PC-3 (cell line): ENCODE measurements at regions of chr22 and their contacts with region 1.

Region 1: DNA sequence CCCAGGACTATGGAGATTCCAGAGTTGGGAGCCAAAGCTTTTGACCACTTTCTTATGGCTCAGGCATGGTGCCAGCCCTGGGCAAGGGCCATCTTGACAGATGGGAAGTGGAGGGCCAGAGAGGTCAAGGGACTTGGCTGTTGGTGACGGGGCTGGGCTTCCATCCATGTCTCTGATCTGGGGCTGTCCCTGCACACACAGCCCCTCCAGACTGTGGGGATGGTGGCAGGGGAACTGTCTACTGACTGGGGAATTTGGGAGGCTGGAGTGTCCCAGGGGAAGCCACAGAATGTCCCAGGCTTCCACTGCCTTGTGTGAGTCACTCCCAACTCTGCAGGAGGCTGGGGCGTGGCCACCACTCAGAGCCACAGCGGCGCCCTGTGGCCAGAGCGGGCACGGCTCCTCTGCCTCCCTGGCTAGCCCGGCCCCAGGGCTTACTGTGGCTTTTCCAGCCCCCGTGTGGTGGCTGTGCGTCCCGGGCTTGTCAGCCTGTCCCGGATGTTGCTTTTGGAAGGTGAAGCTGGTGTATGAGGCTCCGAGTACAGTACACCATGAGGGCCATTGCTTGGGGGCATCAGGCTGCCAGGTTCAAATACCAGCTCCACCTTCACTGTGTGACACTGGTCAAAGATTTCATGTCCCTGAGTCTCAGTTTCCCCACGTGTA is 19.6 kb downstream of the C22orf23 start:
- DNase-seq: peak; percentile 93
- ATAC-seq: peak; percentile 97
- H3K4me3 ChIP-seq: no peak overlapping the region
- H3K27ac ChIP-seq: peak overlapping the region; percentile 37
- H3K4me1 ChIP-seq: peaks cover 10% of the 10 kb centered on the region
- H3K27me3 ChIP-seq: no peaks in the 10 kb centered on the region
- CTCF ChIP-seq: peak; percentile 86

Region 2: DNA sequence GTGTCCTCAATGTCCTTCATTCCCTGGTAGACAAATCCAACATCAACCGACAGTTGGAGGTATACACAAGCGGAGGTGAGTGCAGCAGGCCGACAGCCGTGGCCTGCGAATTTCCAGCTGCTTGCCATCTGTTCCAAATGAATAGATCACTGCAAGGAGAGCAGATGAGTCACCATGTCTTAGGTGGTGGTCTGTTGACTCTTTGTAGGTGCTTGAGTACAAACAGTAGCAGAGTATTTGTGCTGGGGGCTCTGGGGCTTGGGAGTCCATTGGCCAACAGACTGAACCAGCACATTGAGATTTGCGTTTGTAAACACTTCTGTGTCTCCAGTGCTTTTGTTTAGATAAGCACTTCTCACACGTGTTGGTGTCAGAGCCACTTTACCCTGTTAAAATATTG is 63.6 kb before region 1 on chr22:
- CTCF ChIA-PET with region 1: no interaction called
- POLR2A ChIA-PET with region 1: no interaction called
- intact Hi-C with region 1: no loop called
- DNase-seq: no peak
- ATAC-seq: no peak
- H3K4me3 ChIP-seq: no peak overlapping the region
- H3K27ac ChIP-seq: no peak overlapping the region
- H3K4me1 ChIP-seq: no peaks in the 10 kb centered on the region
- H3K27me3 ChIP-seq: no peaks in the 10 kb centered on the region
- CTCF ChIP-seq: no peak

Region 3: DNA sequence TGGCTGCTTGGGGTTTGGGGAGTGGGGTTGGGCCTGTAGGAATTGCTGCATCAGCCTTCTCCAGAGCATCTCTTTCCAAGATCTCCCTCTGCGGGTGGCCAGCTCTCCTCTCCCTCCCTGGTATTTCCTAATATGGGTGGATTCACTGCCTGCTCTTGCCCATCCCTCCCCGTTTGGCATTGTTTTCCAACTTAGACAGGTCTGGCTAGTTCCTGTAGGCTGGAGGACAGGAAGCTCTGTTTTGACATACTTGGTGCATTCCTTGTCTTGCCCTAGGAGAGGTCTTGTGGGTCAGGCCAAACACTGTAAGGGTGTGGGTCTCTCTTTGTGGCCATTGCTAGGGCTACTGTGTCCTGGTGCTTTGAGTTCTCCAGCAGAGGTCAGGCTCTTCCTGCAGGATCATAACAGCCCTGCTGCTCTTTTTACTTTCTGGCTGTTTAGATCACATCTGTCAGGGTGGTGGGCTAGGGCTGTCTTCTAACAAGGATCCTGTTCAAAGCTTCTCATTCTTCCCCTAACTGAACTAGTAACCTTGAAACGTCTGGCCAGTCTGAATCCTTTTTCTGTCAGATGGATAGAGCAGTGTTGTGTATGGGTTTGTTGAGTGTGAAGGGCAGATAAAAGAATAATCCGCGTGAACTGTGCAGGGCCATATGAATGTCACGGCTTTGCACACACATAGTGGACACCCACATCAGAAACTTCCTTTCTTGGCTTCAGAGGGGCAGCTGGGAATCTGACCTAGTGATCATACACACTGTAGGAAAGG is 46.0 kb before region 1 on chr22:
- CTCF ChIA-PET with region 1: no interaction called
- POLR2A ChIA-PET with region 1: no interaction called
- intact Hi-C with region 1: loop called (anchors 5 kb)
- DNase-seq: peak; percentile 70
- ATAC-seq: peak; percentile 88
- H3K4me3 ChIP-seq: no peak overlapping the region
- H3K27ac ChIP-seq: no peak overlapping the region
- H3K4me1 ChIP-seq: peaks cover 4% of the 10 kb centered on the region; the same call in 1 of the 2 replicates
- H3K27me3 ChIP-seq: no peaks in the 10 kb centered on the region
- CTCF ChIP-seq: peak; percentile 57

Region 4: GRCh38 chr22:37996515-37997246 is 62.8 kb after region 1 on chr22:
- CTCF ChIA-PET with region 1: no interaction called
- POLR2A ChIA-PET with region 1: no interaction called
- intact Hi-C with region 1: no loop called
- DNase-seq: no peak
- ATAC-seq: no peak
- H3K4me3 ChIP-seq: no peak overlapping the region
- H3K27ac ChIP-seq: no peak overlapping the region
- H3K4me1 ChIP-seq: peaks cover 14% of the 10 kb centered on the region
- H3K27me3 ChIP-seq: no peaks in the 10 kb centered on the region
- CTCF ChIP-seq: no peak